ENCODE measurements at regions of chr4 and their contacts with region 1.

Region 1: DNA sequence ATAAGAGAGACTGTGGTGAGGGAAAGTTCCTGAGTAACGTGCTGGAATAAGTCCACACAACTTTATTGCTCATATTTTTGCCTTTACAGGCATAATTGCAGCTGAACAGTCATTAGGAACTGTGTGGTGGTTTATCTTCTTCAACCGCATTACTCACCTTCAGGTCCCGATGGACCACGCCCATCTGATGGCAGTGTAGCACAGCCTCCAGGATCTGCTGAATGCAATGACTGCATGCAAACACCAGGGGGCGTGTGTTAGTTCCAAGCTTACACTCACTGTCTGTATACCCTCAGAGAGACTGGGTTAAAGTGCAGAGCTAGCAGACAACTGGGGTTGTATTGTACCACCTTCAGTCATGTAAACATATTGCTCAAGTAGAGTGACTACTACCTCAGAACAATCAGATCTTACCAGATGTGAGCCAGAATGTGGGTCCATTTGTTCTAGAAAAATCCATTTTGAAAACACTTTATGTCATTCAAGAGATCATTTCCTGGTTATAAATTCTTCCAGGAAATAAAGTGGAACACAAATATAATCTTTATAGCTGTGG is 214.0 kb downstream of the CAMK2D start:
- DNase-seq: peak; percentile 73 to 95 (median 87)
- ATAC-seq: peak; percentile 100
- H3K4me3 ChIP-seq: no peak overlapping the region
- H3K4me3 Mint-ChIP-seq: no peak overlapping the region
- H3K27ac ChIP-seq: no peak overlapping the region
- H3K27ac Mint-ChIP-seq: peak overlapping the region; percentile 70
- H3K4me1 ChIP-seq: peaks cover 11% of the 10 kb centered on the region
- H3K4me1 Mint-ChIP-seq: peaks cover 12% of the 10 kb centered on the region
- H3K27me3 ChIP-seq: no peaks in the 10 kb centered on the region
- H3K27me3 Mint-ChIP-seq: no peaks in the 10 kb centered on the region
- CTCF ChIP-seq: peak; percentile 94

Region 2: GRCh38 chr4:113349430-113349829 is 198.1 kb before region 1 on chr4:
- CTCF ChIA-PET with region 1: no interaction called
- POLR2A ChIA-PET with region 1: no interaction called
- intact Hi-C with region 1: no loop called
- DNase-seq: no peak
- ATAC-seq: no peak
- H3K4me3 ChIP-seq: no peak overlapping the region
- H3K4me3 Mint-ChIP-seq: no peak overlapping the region
- H3K27ac ChIP-seq: no peak overlapping the region
- H3K27ac Mint-ChIP-seq: no peak overlapping the region
- H3K4me1 ChIP-seq: no peaks in the 10 kb centered on the region
- H3K4me1 Mint-ChIP-seq: no peaks in the 10 kb centered on the region
- H3K27me3 ChIP-seq: no peaks in the 10 kb centered on the region
- H3K27me3 Mint-ChIP-seq: peaks cover 11% of the 10 kb centered on the region
- CTCF ChIP-seq: no peak

Region 3: GRCh38 chr4:113564493-113564892 is 16.9 kb after region 1 on chr4:
- CTCF ChIA-PET with region 1: interaction called, 24 read pairs
- POLR2A ChIA-PET with region 1: interaction called, 3 read pairs
- intact Hi-C with region 1: loop called (anchors 1 to 2 kb)
- DNase-seq: no peak
- ATAC-seq: no peak
- H3K4me3 ChIP-seq: no peak overlapping the region
- H3K4me3 Mint-ChIP-seq: no peak overlapping the region
- H3K27ac ChIP-seq: no peak overlapping the region
- H3K27ac Mint-ChIP-seq: no peak overlapping the region
- H3K4me1 ChIP-seq: peaks cover 31% of the 10 kb centered on the region
- H3K4me1 Mint-ChIP-seq: peaks cover 44% of the 10 kb centered on the region
- H3K27me3 ChIP-seq: no peaks in the 10 kb centered on the region
- H3K27me3 Mint-ChIP-seq: no peaks in the 10 kb centered on the region
- CTCF ChIP-seq: no peak

Region 4: DNA sequence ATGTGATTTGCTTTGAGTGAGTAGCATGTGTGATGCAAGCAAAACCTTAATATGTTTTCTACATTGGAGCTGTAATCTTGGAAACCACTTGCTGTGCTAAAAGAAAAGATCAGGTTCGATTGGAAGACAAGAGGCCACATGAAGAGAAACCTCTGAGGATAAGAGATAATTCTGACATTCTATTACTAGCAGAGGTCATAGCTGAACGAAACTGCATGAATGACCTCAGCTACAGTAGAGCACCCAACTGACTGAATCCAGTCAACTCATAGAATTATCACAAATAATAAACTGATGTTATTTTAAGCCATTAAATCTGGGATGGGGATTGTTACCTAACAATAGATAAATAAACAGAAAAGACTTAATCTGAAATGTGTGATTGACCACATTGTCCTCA is 66.8 kb after region 1 on chr4:
- CTCF ChIA-PET with region 1: interaction called, 13 read pairs
- POLR2A ChIA-PET with region 1: no interaction called
- intact Hi-C with region 1: no loop called
- DNase-seq: no peak
- ATAC-seq: no peak
- H3K4me3 ChIP-seq: no peak overlapping the region
- H3K4me3 Mint-ChIP-seq: no peak overlapping the region
- H3K27ac ChIP-seq: no peak overlapping the region
- H3K27ac Mint-ChIP-seq: no peak overlapping the region
- H3K4me1 ChIP-seq: peaks cover 3% of the 10 kb centered on the region
- H3K4me1 Mint-ChIP-seq: peaks cover 21% of the 10 kb centered on the region
- H3K27me3 ChIP-seq: no peaks in the 10 kb centered on the region
- H3K27me3 Mint-ChIP-seq: no peaks in the 10 kb centered on the region
- CTCF ChIP-seq: no peak

Region 5: GRCh38 chr4:113673450-113673849 is 125.9 kb after region 1 on chr4:
- CTCF ChIA-PET with region 1: interaction called, 7 read pairs
- POLR2A ChIA-PET with region 1: no interaction called
- intact Hi-C with region 1: loop called (anchors 2 to 5 kb)
- DNase-seq: peak in 8 of 9 experiments; percentile 6 to 50 (median 26)
- ATAC-seq: peak; percentile 77
- H3K4me3 ChIP-seq: no peak overlapping the region
- H3K4me3 Mint-ChIP-seq: no peak overlapping the region
- H3K27ac ChIP-seq: no peak overlapping the region
- H3K27ac Mint-ChIP-seq: peak overlapping the region; percentile 57
- H3K4me1 ChIP-seq: peaks cover 23% of the 10 kb centered on the region
- H3K4me1 Mint-ChIP-seq: peaks cover 58% of the 10 kb centered on the region
- H3K27me3 ChIP-seq: no peaks in the 10 kb centered on the region
- H3K27me3 Mint-ChIP-seq: no peaks in the 10 kb centered on the region
- CTCF ChIP-seq: no peak

Region 6: GRCh38 chr4:113761620-113762185 is 214.1 kb after region 1 on chr4 and contains the start of gene CAMK2D:
- CTCF ChIA-PET with region 1: interaction called, 6 read pairs
- POLR2A ChIA-PET with region 1: interaction called, 12 read pairs
- intact Hi-C with region 1: loop called (anchors 1 kb)
- DNase-seq: peak; percentile 62 to 95 (median 80)
- ATAC-seq: peak; percentile 58
- H3K4me3 ChIP-seq: peak within 1 kb of the TSS; percentile 75 to 85
- H3K4me3 Mint-ChIP-seq: peak within 1 kb of the TSS; percentile 94
- H3K27ac ChIP-seq: peak within 1 kb of the TSS; percentile 96
- H3K27ac Mint-ChIP-seq: peak within 1 kb of the TSS; percentile 98
- H3K4me1 ChIP-seq: peaks cover 26% of the 10 kb centered on the region
- H3K4me1 Mint-ChIP-seq: peaks cover 38% of the 10 kb centered on the region
- H3K27me3 ChIP-seq: no peaks in the 10 kb centered on the region
- H3K27me3 Mint-ChIP-seq: no peaks in the 10 kb centered on the region
- CTCF ChIP-seq: no peak
- total RNA-seq, gene CAMK2D: 29.6 to 31.1 TPM

Region 7: GRCh38 chr4:113908829-113909228 is 361.3 kb after region 1 on chr4:
- CTCF ChIA-PET with region 1: interaction called, 10 read pairs
- POLR2A ChIA-PET with region 1: no interaction called
- intact Hi-C with region 1: loop called in 1 of 2 experiments (anchors 1 kb)
- DNase-seq: peak in 2 of 9 experiments; percentile 29 to 47
- ATAC-seq: no peak
- H3K4me3 ChIP-seq: no peak overlapping the region
- H3K4me3 Mint-ChIP-seq: no peak overlapping the region
- H3K27ac ChIP-seq: no peak overlapping the region
- H3K27ac Mint-ChIP-seq: peak overlapping the region; percentile 2
- H3K4me1 ChIP-seq: peaks cover 26% of the 10 kb centered on the region
- H3K4me1 Mint-ChIP-seq: peaks cover 32% of the 10 kb centered on the region
- H3K27me3 ChIP-seq: no peaks in the 10 kb centered on the region
- H3K27me3 Mint-ChIP-seq: no peaks in the 10 kb centered on the region
- CTCF ChIP-seq: no peak